ENCODE measurements at regions of chr9 and their contacts with region 1.

Region 1: DNA sequence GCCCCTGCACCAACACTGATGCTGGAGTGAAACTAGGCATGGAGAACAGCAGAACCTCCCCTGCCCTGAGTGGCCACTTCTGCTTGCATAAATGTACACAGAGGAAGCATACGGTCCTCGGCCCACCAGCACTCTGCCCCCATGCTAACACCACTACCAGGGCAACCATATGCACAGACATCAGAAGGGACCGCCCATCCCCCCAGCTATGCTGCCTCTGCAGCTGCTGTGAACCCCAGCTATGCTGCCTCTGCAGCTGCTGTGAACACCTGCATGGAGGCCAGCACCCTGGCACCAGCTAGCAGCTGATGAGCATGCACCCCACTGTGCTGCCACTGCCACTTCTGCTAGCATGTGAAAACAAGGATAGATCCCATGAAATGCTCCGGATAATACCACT is 250.3 kb downstream of the TUSC1 start:
- DNase-seq: no peak
- H3K4me3 Mint-ChIP-seq: no peak overlapping the region
- H3K27ac Mint-ChIP-seq: no peak overlapping the region
- H3K4me1 Mint-ChIP-seq: no peaks in the 10 kb centered on the region
- H3K27me3 Mint-ChIP-seq: no peaks in the 10 kb centered on the region
- CTCF ChIP-seq: no peak

Region 2: GRCh38 chr9:25284365-25284764 is 143.5 kb before region 1 on chr9:
- CTCF ChIA-PET with region 1: no interaction called
- intact Hi-C with region 1: no loop called
- DNase-seq: no peak
- H3K4me3 Mint-ChIP-seq: no peak overlapping the region
- H3K27ac Mint-ChIP-seq: no peak overlapping the region
- H3K4me1 Mint-ChIP-seq: no peaks in the 10 kb centered on the region
- H3K27me3 Mint-ChIP-seq: no peaks in the 10 kb centered on the region
- CTCF ChIP-seq: no peak

Region 3: GRCh38 chr9:25442526-25442925 is 14.6 kb after region 1 on chr9:
- CTCF ChIA-PET with region 1: no interaction called
- intact Hi-C with region 1: loop called (anchors 1 kb)
- DNase-seq: no peak
- H3K4me3 Mint-ChIP-seq: no peak overlapping the region
- H3K27ac Mint-ChIP-seq: no peak overlapping the region
- H3K4me1 Mint-ChIP-seq: no peaks in the 10 kb centered on the region
- H3K27me3 Mint-ChIP-seq: no peaks in the 10 kb centered on the region
- CTCF ChIP-seq: no peak

Measured in Calu3 (cell line).